ENCODE measurements at regions of chr4 and their contacts with region 1.

Region 1: GRCh38 chr4:184825896-184826690 is at the start of gene ACSL1:
- DNase-seq: peak; percentile 77
- ATAC-seq: peak; percentile 78
- H3K4me3 Mint-ChIP-seq: peak within 1 kb of the TSS; percentile 94
- H3K27ac Mint-ChIP-seq: peak within 1 kb of the TSS; percentile 91
- H3K4me1 Mint-ChIP-seq: peaks cover 42% of the 10 kb centered on the region
- H3K27me3 Mint-ChIP-seq: no peaks in the 10 kb centered on the region
- CTCF ChIP-seq: no peak
- total RNA-seq, gene ACSL1: 46.3 and 47.0 TPM in 2 replicates

Region 2: DNA sequence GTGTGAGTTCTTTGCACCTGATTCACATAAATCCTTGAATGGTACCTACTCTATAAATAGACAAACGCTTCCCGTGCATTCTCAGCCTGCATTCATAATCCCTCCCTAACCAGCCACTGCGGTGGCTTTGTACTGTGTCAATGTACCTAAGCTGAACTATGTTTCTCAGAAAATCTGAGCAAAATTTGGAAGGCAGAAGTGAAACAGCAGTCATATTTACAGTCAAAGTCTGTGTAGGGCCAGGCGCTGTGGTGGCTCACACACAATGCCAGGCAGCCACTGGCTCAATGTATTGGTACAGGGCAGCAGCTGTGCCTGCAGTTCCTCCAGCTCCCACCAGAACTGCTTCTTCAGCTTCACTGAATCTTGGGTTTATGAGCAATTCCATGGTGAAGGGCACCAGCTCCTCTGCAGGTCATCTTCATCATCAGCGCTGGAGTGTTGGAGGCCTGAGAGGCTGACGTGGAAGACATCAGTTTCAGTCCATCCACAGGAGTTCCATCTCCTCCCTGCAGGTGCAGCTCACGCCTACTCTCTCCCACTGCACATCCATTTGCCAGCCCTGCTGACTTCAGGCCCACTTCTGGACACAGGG is 319.5 kb before region 1 on chr4:
- CTCF ChIA-PET with region 1: no interaction called
- POLR2A ChIA-PET with region 1: no interaction called
- intact Hi-C with region 1: no loop called
- DNase-seq: peak; percentile 38
- ATAC-seq: peak; percentile 98
- H3K4me3 Mint-ChIP-seq: peak overlapping the region; percentile 67
- H3K27ac Mint-ChIP-seq: peak overlapping the region; percentile 88
- H3K4me1 Mint-ChIP-seq: peaks cover 58% of the 10 kb centered on the region
- H3K27me3 Mint-ChIP-seq: no peaks in the 10 kb centered on the region
- CTCF ChIP-seq: no peak

Region 3: DNA sequence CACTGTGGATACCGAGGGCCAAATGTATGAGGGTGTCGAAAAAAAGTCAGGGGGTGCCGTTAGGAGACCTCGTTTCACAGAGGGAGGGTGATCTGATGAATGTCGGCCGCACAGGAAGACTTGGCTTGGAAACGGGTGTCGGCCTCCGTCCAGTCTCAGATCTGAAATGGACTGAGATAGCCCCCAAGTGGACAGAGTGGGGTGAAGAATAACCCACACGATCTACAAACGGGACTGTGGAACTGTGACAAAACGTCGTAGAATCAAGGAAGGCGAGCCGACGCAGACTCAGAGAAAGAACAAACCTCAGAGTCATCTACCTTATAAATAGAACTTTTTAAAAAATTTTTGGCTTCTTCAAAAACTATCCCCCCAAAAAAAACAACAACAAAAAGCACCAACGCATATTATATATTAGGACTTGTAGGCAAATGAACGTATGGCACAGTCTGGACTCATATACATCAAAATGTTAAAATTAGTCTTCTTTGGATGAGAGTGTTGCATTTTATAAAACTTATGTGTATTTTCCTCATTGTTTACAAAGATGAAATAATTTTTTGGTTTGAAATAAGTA is 288.0 kb before region 1 on chr4:
- CTCF ChIA-PET with region 1: no interaction called
- POLR2A ChIA-PET with region 1: no interaction called
- intact Hi-C with region 1: loop called (anchors 5 kb)
- DNase-seq: peak; percentile 54
- ATAC-seq: peak; percentile 68
- H3K4me3 Mint-ChIP-seq: peak overlapping the region; percentile 96
- H3K27ac Mint-ChIP-seq: peak overlapping the region; percentile 100
- H3K4me1 Mint-ChIP-seq: peaks cover 49% of the 10 kb centered on the region
- H3K27me3 Mint-ChIP-seq: no peaks in the 10 kb centered on the region
- CTCF ChIP-seq: no peak

Region 4: GRCh38 chr4:184782731-184783373 is 43.2 kb before region 1 on chr4:
- CTCF ChIA-PET with region 1: no interaction called
- POLR2A ChIA-PET with region 1: interaction called, 7 read pairs
- intact Hi-C with region 1: loop called (anchors 2 kb)
- DNase-seq: peak; percentile 25
- ATAC-seq: peak; percentile 72
- H3K4me3 Mint-ChIP-seq: peak overlapping the region; percentile 75
- H3K27ac Mint-ChIP-seq: peak overlapping the region; percentile 86
- H3K4me1 Mint-ChIP-seq: peaks cover 20% of the 10 kb centered on the region
- H3K27me3 Mint-ChIP-seq: no peaks in the 10 kb centered on the region
- CTCF ChIP-seq: no peak

Region 5: GRCh38 chr4:184851200-184851541 is 25.1 kb after region 1 on chr4:
- CTCF ChIA-PET with region 1: interaction called, 4 read pairs
- POLR2A ChIA-PET with region 1: interaction called, 126 read pairs
- intact Hi-C with region 1: loop called (anchors 1 kb)
- DNase-seq: no peak
- ATAC-seq: peak; percentile 71
- H3K4me3 Mint-ChIP-seq: no peak overlapping the region
- H3K27ac Mint-ChIP-seq: no peak overlapping the region
- H3K4me1 Mint-ChIP-seq: peaks cover 38% of the 10 kb centered on the region
- H3K27me3 Mint-ChIP-seq: no peaks in the 10 kb centered on the region
- CTCF ChIP-seq: no peak

Region 6: GRCh38 chr4:185142912-185143595 is 317.0 kb after region 1 on chr4 and contains the start of gene SLC25A4:
- CTCF ChIA-PET with region 1: no interaction called
- POLR2A ChIA-PET with region 1: interaction called, 3 read pairs
- intact Hi-C with region 1: loop called (anchors 5 kb)
- DNase-seq: peak; percentile 92
- ATAC-seq: peak; percentile 97
- H3K4me3 Mint-ChIP-seq: peak within 1 kb of the TSS; percentile 93
- H3K27ac Mint-ChIP-seq: peak within 1 kb of the TSS; percentile 94
- H3K4me1 Mint-ChIP-seq: peaks cover 13% of the 10 kb centered on the region
- H3K27me3 Mint-ChIP-seq: peaks cover 5% of the 10 kb centered on the region
- CTCF ChIP-seq: no peak
- total RNA-seq, gene SLC25A4: 8.9 and 9.4 TPM in 2 replicates